Activated T-helper 1 cell treated with anti-CD3 and anti-CD28 coated beads, Interleukin-12 subunit alpha, Interleukin-12 subunit beta, Interleukin-2, Interleukin-4 antibody, amounts not matched to agents 30 ng/mL and 10 ng/mL and 1 ng/mL, durations not matched to agents 14 hours and 24 hours and 36 hours (primary cell): ENCODE measurements at regions of chr6 and their contacts with region 1.

Region 1: GRCh38 chr6:45714741-45715507 is 300.7 kb downstream of the CLIC5 start:
- DNase-seq: peak; percentile 46
- H3K4me3 Mint-ChIP-seq: no peak overlapping the region
- H3K27ac Mint-ChIP-seq: peak overlapping the region; percentile 73
- H3K4me1 Mint-ChIP-seq: peaks cover 38% of the 10 kb centered on the region
- H3K27me3 Mint-ChIP-seq: peaks cover 2% of the 10 kb centered on the region

Region 2: GRCh38 chr6:44475779-44476434 is 1239.0 kb before region 1 on chr6:
- intact Hi-C with region 1: loop called (anchors 2 kb)
- DNase-seq: peak; percentile 61
- H3K4me3 Mint-ChIP-seq: no peak overlapping the region
- H3K27ac Mint-ChIP-seq: no peak overlapping the region
- H3K4me1 Mint-ChIP-seq: no peaks in the 10 kb centered on the region
- H3K27me3 Mint-ChIP-seq: peaks cover 13% of the 10 kb centered on the region

Region 3: GRCh38 chr6:45009576-45009975 is 705.3 kb before region 1 on chr6:
- intact Hi-C with region 1: loop called (anchors 2 kb)
- DNase-seq: no peak
- H3K4me3 Mint-ChIP-seq: no peak overlapping the region
- H3K27ac Mint-ChIP-seq: peak overlapping the region; percentile 67
- H3K4me1 Mint-ChIP-seq: peaks cover 30% of the 10 kb centered on the region
- H3K27me3 Mint-ChIP-seq: no peaks in the 10 kb centered on the region

Region 4: DNA sequence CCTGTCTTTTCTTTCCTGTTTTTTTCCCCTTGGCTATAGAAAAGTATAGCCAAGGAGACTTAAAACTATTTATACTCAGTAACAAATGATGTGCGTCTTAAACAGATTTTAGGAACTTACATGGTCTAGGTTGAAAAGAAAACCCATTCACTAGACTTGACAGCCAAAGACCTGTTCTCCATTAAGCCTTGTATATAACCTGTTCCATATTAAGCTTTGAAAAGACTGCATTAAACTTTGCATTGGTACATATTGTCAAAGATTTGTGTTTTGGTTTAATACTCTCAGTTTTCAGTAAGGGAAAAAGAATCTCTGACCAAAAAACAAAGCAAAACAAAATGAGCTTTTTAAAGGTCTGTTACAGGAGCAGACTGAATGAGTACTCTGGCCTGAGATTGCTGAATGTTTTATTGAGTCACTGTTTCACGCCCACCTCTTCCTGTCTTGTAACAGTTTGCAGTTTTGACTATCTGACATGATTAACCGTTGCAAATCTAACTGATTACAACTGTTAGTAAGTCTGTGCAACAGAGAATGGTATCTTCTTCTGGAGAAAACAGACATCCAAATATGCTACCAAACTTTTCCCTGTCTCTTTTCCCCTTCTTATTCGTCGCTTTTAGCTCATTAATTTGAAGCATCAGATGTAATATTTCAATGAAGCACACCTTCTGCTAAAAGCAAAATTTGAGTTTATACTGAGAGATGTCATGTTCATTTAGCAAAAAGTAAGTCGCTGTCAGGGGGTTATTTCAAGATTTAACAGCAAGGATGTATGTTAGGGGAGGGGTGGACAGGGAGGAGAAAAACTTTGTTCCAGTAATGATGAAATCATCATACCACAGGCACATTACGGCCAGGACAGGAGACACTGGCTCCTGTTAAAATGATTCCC is 278.1 kb before region 1 on chr6:
- intact Hi-C with region 1: loop called (anchors 1 kb)
- DNase-seq: no peak
- H3K4me3 Mint-ChIP-seq: peak overlapping the region; percentile 70
- H3K27ac Mint-ChIP-seq: peak overlapping the region; percentile 86
- H3K4me1 Mint-ChIP-seq: peaks cover 59% of the 10 kb centered on the region
- H3K27me3 Mint-ChIP-seq: no peaks in the 10 kb centered on the region

Region 5: GRCh38 chr6:45626087-45626891 is 88.6 kb before region 1 on chr6:
- intact Hi-C with region 1: loop called (anchors 2 kb)
- DNase-seq: no peak
- H3K4me3 Mint-ChIP-seq: no peak overlapping the region
- H3K27ac Mint-ChIP-seq: peak overlapping the region; percentile 41
- H3K4me1 Mint-ChIP-seq: peaks cover 36% of the 10 kb centered on the region
- H3K27me3 Mint-ChIP-seq: no peaks in the 10 kb centered on the region

Region 6: DNA sequence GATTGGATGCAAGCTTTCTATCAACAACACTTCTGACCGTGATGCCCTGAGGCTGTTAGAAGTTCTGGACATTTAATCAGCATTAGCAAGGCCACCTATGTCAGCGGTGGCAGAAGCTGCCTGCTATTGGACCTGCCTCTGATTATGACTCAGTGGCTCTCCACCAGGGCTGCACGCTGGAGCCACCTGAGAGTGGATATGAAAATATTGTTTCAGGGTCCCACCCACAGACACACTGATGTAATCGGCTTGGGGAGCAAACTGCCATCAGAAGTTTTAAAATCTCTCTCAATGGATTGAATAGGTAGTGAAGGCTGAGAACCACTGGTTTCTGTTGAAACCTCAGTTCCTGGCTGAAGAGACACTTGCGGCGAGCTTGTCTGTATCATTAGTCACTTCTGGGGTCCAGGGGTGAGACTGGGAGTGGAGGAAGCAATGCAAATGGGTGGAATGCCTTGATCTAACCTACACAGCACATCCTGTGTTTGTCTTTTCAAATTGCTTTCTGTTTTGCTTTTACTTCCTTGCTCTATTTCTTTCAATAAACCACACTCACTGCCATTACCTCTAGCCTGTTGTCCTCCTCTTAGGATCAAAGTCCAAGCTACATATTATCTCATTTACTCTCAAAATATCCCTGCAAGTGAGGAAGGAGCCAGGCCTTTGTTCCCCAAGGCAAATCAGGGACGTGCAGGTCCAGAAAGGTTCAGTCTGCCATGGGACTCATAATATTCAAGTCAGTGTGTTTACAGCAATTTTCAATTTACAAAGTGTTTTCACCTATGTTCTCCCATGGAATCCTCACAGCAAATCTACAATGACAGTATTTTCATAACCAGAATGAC is 296.5 kb after region 1 on chr6:
- intact Hi-C with region 1: loop called (anchors 1 kb)
- DNase-seq: peak; percentile 63
- H3K4me3 Mint-ChIP-seq: peak overlapping the region; percentile 47
- H3K27ac Mint-ChIP-seq: peak overlapping the region; percentile 74
- H3K4me1 Mint-ChIP-seq: peaks cover 55% of the 10 kb centered on the region
- H3K27me3 Mint-ChIP-seq: peaks cover 11% of the 10 kb centered on the region